Activated CD8-positive, alpha-beta memory T cell treated with anti-CD3 and anti-CD28 coated beads, Interleukin-2, amount 10 ng/mL, durations not matched to agents 7 days and 5 days (primary cell): ENCODE measurements at regions of chr18 and their contacts with region 1.

Region 1: DNA sequence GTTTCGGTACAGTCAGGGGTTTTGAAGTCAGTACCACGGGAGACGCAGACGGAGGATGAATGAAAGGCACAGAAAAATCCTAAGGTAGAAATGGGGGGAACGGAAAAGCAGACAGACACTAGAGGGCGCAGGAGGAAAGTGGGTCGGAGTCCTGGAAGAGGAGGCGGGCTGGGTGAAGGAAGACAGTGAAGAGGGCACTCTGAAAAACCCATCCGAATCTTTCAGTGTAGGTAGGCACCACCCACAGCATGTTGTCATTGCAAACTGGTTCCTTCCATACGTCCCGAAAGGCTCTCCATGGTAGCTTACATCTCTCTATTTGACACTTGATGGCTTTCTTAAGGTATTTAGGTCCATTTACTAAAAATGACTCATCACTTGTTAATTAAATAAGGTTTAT is 18.5 kb upstream of the ZNF236 start:
- DNase-seq: peak; percentile 80
- ATAC-seq: peak; percentile 73
- H3K4me3 Mint-ChIP-seq: no peak overlapping the region
- H3K27ac Mint-ChIP-seq: no peak overlapping the region
- H3K4me1 Mint-ChIP-seq: peaks cover 7% of the 10 kb centered on the region
- H3K27me3 Mint-ChIP-seq: peaks cover 17% of the 10 kb centered on the region

Region 2: DNA sequence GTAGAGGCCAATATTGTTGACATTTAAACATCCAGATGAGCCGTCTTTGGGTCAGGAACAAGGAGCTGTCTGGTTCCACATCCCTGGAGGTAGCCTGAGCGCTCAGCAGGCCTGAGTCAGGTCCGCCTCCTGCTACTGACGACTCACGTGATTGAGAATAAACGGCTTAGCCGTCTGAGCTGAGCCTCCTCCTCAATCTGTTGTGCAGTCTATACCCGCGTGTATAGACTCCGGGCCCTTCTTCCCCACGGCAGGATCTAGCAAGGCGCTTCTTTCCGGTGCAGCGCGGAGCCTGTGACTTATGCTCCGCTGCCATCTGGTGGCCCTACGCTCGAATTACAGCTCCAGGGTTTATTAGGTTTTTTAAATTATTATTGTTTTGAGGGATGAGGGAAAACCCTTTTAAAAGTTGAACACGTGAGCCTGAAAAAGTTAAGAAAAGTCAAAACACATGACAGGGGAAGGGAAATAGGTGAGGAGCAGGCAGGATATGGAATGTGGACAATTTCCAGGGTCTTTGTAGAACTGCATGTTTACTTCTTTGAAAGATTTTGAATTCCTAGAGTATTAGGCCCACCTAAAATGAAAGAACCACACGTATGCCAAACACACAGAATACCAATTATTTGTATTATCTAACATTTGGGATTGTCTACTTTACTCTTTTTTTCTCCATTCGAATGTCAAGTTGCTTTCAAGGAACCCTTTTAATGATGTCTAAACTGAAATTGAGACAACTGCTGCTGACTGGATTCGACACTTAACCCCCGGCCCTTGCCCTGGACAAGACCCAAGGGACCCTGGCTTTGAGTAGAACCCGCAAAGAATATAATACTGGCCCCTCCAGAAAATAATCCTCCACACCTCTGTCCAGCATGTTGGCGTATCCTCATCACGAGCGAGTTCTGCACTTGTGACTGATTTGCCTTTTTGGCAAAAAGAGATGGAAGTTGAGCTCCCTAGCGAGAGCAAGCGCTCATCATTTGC is 93.9 kb before region 1 on chr18:
- CTCF ChIA-PET with region 1: interaction called, 13 read pairs
- DNase-seq: peak; percentile 71
- ATAC-seq: peak; percentile 86
- H3K4me3 Mint-ChIP-seq: no peak overlapping the region
- H3K27ac Mint-ChIP-seq: peak overlapping the region; percentile 30
- H3K4me1 Mint-ChIP-seq: peaks cover 2% of the 10 kb centered on the region
- H3K27me3 Mint-ChIP-seq: peaks cover 6% of the 10 kb centered on the region

Region 3: GRCh38 chr18:76783759-76784484 is 19.9 kb before region 1 on chr18:
- CTCF ChIA-PET with region 1: interaction called, 54 read pairs
- DNase-seq: no peak
- ATAC-seq: no peak
- H3K4me3 Mint-ChIP-seq: no peak overlapping the region
- H3K27ac Mint-ChIP-seq: no peak overlapping the region
- H3K4me1 Mint-ChIP-seq: peaks cover 11% of the 10 kb centered on the region
- H3K27me3 Mint-ChIP-seq: peaks cover 46% of the 10 kb centered on the region

Region 4: DNA sequence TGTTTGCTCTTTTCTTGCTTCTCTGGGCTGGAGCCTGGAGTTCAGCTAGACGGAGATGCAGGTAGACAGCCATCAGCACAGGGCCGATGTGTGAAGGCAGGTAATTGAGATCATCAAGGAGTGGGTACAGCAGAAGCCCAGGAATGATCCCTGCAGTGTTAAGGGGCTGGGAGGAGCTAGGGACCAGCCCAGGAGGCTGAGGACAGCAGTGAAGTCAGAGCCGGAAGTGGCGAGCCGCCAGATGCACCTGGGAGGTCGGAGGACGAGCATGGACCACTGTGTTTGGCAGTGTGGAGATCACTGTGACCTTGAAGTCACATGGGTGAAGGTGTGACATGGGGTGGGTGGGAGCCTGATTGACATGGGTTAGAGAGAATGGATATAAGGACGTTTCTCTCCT is 12.3 kb after region 1 on chr18:
- CTCF ChIA-PET with region 1: interaction called, 57 read pairs
- DNase-seq: no peak
- ATAC-seq: no peak
- H3K4me3 Mint-ChIP-seq: no peak overlapping the region
- H3K27ac Mint-ChIP-seq: no peak overlapping the region
- H3K4me1 Mint-ChIP-seq: peaks cover 24% of the 10 kb centered on the region
- H3K27me3 Mint-ChIP-seq: no peaks in the 10 kb centered on the region

Region 5: GRCh38 chr18:76875390-76876325 is 71.8 kb after region 1 on chr18:
- CTCF ChIA-PET with region 1: interaction called, 15 read pairs
- DNase-seq: peak; percentile 63
- ATAC-seq: peak; percentile 52
- H3K4me3 Mint-ChIP-seq: no peak overlapping the region
- H3K27ac Mint-ChIP-seq: no peak overlapping the region
- H3K4me1 Mint-ChIP-seq: peaks cover 14% of the 10 kb centered on the region
- H3K27me3 Mint-ChIP-seq: no peaks in the 10 kb centered on the region

Region 6: GRCh38 chr18:76897257-76897656 is 93.4 kb after region 1 on chr18:
- CTCF ChIA-PET with region 1: no interaction called
- DNase-seq: no peak
- ATAC-seq: no peak
- H3K4me3 Mint-ChIP-seq: no peak overlapping the region
- H3K27ac Mint-ChIP-seq: no peak overlapping the region
- H3K4me1 Mint-ChIP-seq: no peaks in the 10 kb centered on the region
- H3K27me3 Mint-ChIP-seq: no peaks in the 10 kb centered on the region

Region 7: GRCh38 chr18:77000527-77000926 is 196.7 kb after region 1 on chr18:
- CTCF ChIA-PET with region 1: interaction called, 17 read pairs
- DNase-seq: peak; percentile 60
- ATAC-seq: no peak
- H3K4me3 Mint-ChIP-seq: no peak overlapping the region
- H3K27ac Mint-ChIP-seq: peak overlapping the region; percentile 42
- H3K4me1 Mint-ChIP-seq: peaks cover 37% of the 10 kb centered on the region
- H3K27me3 Mint-ChIP-seq: no peaks in the 10 kb centered on the region